Sciatic nerve (tissue), 2 donors: ENCODE measurements at regions of chr7 and their contacts with region 1.

Region 1: GRCh38 chr7:129807863-129808262 is 144.9 kb downstream of the UBE2H start:
- DNase-seq: no peak
- ATAC-seq: no peak

Region 2: GRCh38 chr7:129859183-129859582 is 51.3 kb after region 1 on chr7:
- intact Hi-C with region 1: loop called (anchors 2 kb)
- DNase-seq: no peak
- ATAC-seq: peak; percentile 46